Activated CD4-positive, alpha-beta T cell treated with anti-CD3 and anti-CD28 coated beads, Interleukin-2, amount 10 ng/mL, durations not matched to agents 24 days and 14 days (primary cell): ENCODE measurements at regions of chr3 and their contacts with region 1.

Region 1: GRCh38 chr3:122484985-122485384 is 29.8 kb downstream of the KPNA1 start:
- DNase-seq: no peak
- H3K4me3 Mint-ChIP-seq: no peak overlapping the region
- H3K27ac Mint-ChIP-seq: peak overlapping the region; percentile 54
- H3K4me1 Mint-ChIP-seq: peaks cover 41% of the 10 kb centered on the region
- H3K27me3 Mint-ChIP-seq: no peaks in the 10 kb centered on the region

Region 2: DNA sequence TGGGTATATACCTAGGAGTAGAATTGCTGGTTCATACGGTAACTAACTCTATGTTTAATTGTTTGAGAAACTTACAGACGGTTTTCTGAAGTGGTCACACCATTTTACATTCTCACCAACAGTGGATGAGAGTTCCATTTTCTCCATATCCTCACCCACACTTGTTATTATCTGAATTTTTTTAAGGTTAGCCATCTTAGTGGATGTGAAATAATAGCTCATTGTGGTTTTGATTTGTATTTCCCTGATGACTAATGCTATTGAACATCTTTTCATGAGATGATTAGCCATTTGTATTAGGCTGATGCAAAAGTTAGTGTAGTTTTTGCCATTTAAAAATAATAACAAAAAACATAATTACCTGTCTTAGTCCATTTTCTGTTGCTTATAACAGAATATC is 141.3 kb before region 1 on chr3:
- intact Hi-C with region 1: no loop called
- DNase-seq: no peak
- H3K4me3 Mint-ChIP-seq: no peak overlapping the region
- H3K27ac Mint-ChIP-seq: no peak overlapping the region
- H3K4me1 Mint-ChIP-seq: no peaks in the 10 kb centered on the region
- H3K27me3 Mint-ChIP-seq: peaks cover 11% of the 10 kb centered on the region

Region 3: DNA sequence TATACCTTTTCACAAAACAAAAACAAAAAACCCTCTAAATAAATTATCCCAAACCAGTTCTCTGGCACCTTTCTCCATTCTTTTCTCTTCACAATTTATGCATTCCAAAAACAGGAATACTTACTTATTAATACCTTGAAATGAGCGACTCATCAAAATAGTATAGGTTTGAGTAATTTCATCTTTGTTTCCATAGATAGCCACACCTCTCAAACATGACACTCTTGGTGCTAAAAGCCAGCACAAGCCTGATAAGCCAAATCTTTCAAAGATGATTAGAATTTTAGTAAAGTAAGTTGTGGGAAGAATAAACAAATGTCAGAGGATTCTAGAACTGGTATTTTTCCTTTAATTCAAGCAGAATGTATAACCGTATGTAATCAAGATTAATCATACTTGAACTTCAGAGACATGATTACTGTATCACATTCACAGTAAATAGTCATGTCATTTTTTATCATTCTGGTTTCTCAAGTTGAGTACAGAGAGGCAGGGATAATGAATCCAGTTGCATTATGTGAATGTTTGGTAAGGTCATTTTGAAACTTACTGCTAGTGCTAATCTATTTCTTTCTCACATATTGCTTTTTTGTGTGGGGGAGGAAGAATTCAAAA is 57.0 kb before region 1 on chr3:
- intact Hi-C with region 1: loop called (anchors 1 kb)
- DNase-seq: no peak
- H3K4me3 Mint-ChIP-seq: no peak overlapping the region
- H3K27ac Mint-ChIP-seq: peak overlapping the region; percentile 72
- H3K4me1 Mint-ChIP-seq: peaks cover 13% of the 10 kb centered on the region
- H3K27me3 Mint-ChIP-seq: no peaks in the 10 kb centered on the region

Region 4: GRCh38 chr3:122497425-122497824 is 12.4 kb after region 1 on chr3:
- intact Hi-C with region 1: loop called (anchors 1 kb)
- DNase-seq: peak; percentile 67
- H3K4me3 Mint-ChIP-seq: no peak overlapping the region
- H3K27ac Mint-ChIP-seq: peak overlapping the region; percentile 15
- H3K4me1 Mint-ChIP-seq: peaks cover 29% of the 10 kb centered on the region
- H3K27me3 Mint-ChIP-seq: no peaks in the 10 kb centered on the region

Region 5: GRCh38 chr3:122514123-122515019 is 29.4 kb after region 1 on chr3 and contains the start of gene KPNA1:
- intact Hi-C with region 1: loop called (anchors 1 kb)
- DNase-seq: peak; percentile 97
- H3K4me3 Mint-ChIP-seq: peak within 1 kb of the TSS; percentile 84
- H3K27ac Mint-ChIP-seq: peak within 1 kb of the TSS; percentile 91
- H3K4me1 Mint-ChIP-seq: peaks cover 26% of the 10 kb centered on the region
- H3K27me3 Mint-ChIP-seq: no peaks in the 10 kb centered on the region
- total RNA-seq, gene KPNA1: 78.4 and 79.4 TPM in 2 replicates

Region 6: DNA sequence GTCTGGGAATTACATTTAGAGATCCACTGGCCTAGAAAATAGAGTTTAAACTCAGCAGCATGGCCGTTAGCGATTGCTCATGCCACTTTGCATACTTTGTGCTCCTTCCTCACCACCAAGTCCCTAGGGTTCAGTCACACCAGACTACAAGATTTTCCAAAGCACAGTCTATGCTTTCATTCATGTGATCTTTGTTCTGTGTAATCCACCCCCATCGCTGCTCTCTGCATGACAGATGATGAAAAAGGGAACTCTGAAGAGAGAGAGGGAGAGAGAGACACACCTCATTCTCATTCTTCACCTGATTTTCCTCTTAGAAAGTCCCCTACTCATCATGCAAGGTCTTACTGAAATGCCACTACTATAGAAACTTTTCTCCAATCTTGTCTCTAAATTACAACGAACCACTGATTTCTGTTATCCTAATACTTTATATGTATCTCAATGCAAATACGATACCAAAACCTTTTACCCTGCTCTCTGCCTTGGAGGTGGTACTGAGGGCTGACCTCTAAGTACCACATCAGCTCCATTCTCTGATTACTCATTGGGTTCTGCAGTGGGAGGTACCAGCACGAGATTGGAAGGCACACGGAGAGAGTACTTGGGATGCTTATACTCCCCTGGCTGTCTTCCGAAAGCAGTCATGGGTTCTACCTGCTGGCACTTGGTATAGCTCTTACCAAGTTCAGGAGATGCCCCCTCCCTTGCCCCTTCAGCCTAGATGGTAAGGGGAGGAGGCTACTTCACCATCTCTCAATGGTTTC is 91.4 kb after region 1 on chr3:
- intact Hi-C with region 1: loop called (anchors 1 kb)
- DNase-seq: peak; percentile 67
- H3K4me3 Mint-ChIP-seq: peak overlapping the region; percentile 1
- H3K27ac Mint-ChIP-seq: peak overlapping the region; percentile 70
- H3K4me1 Mint-ChIP-seq: peaks cover 58% of the 10 kb centered on the region
- H3K27me3 Mint-ChIP-seq: no peaks in the 10 kb centered on the region

Region 7: GRCh38 chr3:122858373-122858772 is 373.4 kb after region 1 on chr3:
- intact Hi-C with region 1: no loop called
- DNase-seq: no peak
- H3K4me3 Mint-ChIP-seq: no peak overlapping the region
- H3K27ac Mint-ChIP-seq: no peak overlapping the region
- H3K4me1 Mint-ChIP-seq: peaks cover 6% of the 10 kb centered on the region
- H3K27me3 Mint-ChIP-seq: no peaks in the 10 kb centered on the region